Uterus (tissue), 4 donors: ENCODE measurements at regions of chr11 and their contacts with region 1.

Region 1: DNA sequence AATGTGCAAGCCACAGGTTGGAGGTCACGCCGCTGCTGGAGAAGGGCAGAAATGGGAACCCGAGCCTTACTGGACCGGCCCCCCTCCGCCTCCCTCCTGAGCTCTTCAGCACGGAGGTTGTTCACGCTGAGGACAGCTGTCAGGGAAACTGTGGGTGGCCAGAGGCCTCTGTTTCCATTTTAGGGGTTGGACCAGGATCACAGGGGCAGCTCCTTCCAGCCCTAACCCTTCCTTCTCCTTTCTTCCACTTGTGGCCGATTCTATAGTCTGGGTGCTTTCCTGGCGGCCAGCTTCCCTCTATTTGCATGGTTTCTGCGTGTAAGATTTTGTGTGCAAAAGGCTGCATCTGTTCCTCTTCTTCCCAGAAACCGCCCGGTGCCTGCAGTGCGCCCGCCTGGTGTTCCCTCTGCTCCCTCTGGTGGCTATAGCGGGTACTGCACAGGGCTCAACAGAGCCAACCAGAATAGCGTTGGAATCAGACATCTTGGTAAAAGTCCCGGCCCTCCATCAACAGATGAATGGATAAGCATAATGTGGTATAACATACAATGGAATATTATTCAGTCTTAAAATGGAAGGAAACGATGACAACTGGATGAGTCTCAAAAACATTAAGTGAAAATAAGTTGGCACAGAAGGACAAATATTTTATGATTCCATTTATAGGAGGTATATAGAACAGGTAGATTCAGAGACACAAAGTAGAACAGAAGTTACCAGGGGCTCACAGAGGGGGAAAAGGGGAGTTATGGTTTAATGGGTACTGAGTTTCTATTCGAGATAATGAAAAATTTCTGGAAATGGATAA is 8.4 kb upstream of the SLC22A8 start:
- DNase-seq: peak; percentile 84 to 85
- H3K4me3 ChIP-seq: no peak overlapping the region
- H3K27ac ChIP-seq: no peak overlapping the region
- H3K4me1 ChIP-seq: no peaks in the 10 kb centered on the region
- H3K27me3 ChIP-seq: no peaks in the 10 kb centered on the region
- CTCF ChIP-seq: peak; percentile 98 to 100 (median 99)
- POLR2A ChIP-seq: no peak

Region 2: DNA sequence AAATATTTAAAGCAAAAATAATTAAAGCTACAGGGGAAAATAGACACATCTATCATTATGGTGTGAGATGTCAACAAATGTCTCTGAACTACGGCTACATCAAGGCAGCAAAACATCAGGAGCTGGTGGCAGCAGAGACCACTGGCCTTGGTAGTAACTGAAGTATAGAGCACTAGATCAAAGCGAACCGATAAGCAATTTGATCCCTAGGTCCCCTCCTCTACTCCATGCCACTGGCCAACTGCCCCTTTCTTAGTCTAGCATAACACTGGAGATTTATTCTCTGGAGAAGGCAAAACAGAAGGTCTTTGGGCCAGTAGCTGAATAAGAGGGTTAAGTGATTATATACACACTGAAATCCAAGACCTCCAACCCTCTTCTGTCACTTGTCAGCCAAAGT is 1093.1 kb before region 1 on chr11:
- intact Hi-C with region 1: loop called (anchors 10 kb)
- DNase-seq: no peak
- H3K4me3 ChIP-seq: no peak overlapping the region
- H3K27ac ChIP-seq: no peak overlapping the region
- H3K4me1 ChIP-seq: no peaks in the 10 kb centered on the region
- H3K27me3 ChIP-seq: no peaks in the 10 kb centered on the region
- CTCF ChIP-seq: no peak
- POLR2A ChIP-seq: no peak

Region 3: GRCh38 chr11:62905927-62906531 is 118.0 kb before region 1 on chr11:
- intact Hi-C with region 1: loop called (anchors 2 kb)
- DNase-seq: peak; percentile 82 to 87
- H3K4me3 ChIP-seq: no peak overlapping the region
- H3K27ac ChIP-seq: peak overlapping the region; percentile 29 to 30
- H3K4me1 ChIP-seq: no peaks in the 10 kb centered on the region
- H3K27me3 ChIP-seq: no peaks in the 10 kb centered on the region
- CTCF ChIP-seq: peak; percentile 97 to 99 (median 98)
- POLR2A ChIP-seq: no peak